ENCODE measurements at regions of chr17 and their contacts with region 1.

Region 1: DNA sequence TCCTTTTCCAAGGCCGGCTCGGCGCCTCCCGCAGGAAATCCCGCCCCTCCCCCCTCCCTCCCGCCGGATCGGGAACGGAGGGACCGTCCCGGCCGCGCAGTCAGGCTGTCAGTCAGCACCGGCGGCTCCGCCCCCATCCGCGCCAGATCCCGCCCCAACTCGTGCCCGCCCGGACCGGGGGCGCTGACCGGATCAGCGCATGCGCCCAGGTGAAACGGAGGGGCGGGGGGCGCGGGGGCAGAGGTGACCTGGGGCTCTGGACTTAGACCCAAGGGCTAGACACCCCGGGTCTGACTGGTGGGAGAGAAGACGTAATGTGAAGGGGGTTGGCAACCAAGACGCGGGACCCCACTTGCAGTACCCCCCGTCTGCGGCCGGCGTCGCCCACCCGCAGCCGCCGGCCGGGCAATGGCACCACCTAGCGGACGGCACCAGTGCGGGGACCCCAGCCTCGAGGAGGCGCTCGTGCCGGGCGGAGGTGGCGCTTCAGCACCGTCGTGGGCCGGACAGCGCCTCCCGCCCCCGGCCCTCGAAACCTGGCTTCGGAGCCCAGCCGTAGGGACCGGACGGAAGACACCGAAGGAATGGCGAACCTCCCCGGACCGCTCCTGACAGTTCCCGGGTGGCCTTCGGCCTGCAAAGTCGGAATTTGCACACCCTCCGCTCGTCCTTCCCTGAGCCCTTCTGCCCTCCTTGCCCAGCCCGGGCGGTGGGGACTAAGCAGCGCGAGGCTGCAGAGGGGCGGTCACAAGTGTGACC is at the start of gene CASKIN2:
- DNase-seq: peak; percentile 56 to 89 (median 80)
- ATAC-seq: peak; percentile 59
- H3K4me3 ChIP-seq: peak within 1 kb of the TSS; percentile 79 to 97
- H3K4me3 Mint-ChIP-seq: peak within 1 kb of the TSS; percentile 77
- H3K27ac ChIP-seq: peak within 1 kb of the TSS in 1 of 2 experiments; percentile 32
- H3K27ac Mint-ChIP-seq: no peak within 1 kb of the TSS
- H3K4me1 ChIP-seq: peaks cover 35% of the 10 kb centered on the region
- H3K4me1 Mint-ChIP-seq: peaks cover 26% of the 10 kb centered on the region
- H3K27me3 ChIP-seq: no peaks in the 10 kb centered on the region
- H3K27me3 Mint-ChIP-seq: no peaks in the 10 kb centered on the region
- CTCF ChIP-seq: peak; percentile 99
- total RNA-seq, gene CASKIN2: 0.64 to 0.98 TPM

Region 2: GRCh38 chr17:75271233-75271954 is 244.3 kb before region 1 on chr17:
- CTCF ChIA-PET with region 1: interaction called, 3 read pairs
- POLR2A ChIA-PET with region 1: interaction called, 5 read pairs
- intact Hi-C with region 1: loop called in 1 of 2 experiments (anchors 2 kb)
- DNase-seq: peak; percentile 75 to 94 (median 88)
- ATAC-seq: peak; percentile 92
- H3K4me3 ChIP-seq: peak overlapping the region; percentile 84 to 93
- H3K4me3 Mint-ChIP-seq: peak overlapping the region; percentile 81
- H3K27ac ChIP-seq: peak overlapping the region; percentile 82 to 91
- H3K27ac Mint-ChIP-seq: peak overlapping the region; percentile 84
- H3K4me1 ChIP-seq: peaks cover 18% of the 10 kb centered on the region
- H3K4me1 Mint-ChIP-seq: peaks cover 25% of the 10 kb centered on the region
- H3K27me3 ChIP-seq: no peaks in the 10 kb centered on the region
- H3K27me3 Mint-ChIP-seq: no peaks in the 10 kb centered on the region
- CTCF ChIP-seq: peak; percentile 65

Region 3: GRCh38 chr17:75456417-75457046 is 59.1 kb before region 1 on chr17 and contains the start of gene TMEM94:
- CTCF ChIA-PET with region 1: interaction called, 4 read pairs
- POLR2A ChIA-PET with region 1: interaction called, 18 read pairs
- intact Hi-C with region 1: loop called (anchors 2 kb)
- DNase-seq: peak; percentile 80 to 98 (median 91)
- ATAC-seq: peak; percentile 97
- H3K4me3 ChIP-seq: peak within 1 kb of the TSS; percentile 100
- H3K4me3 Mint-ChIP-seq: peak within 1 kb of the TSS; percentile 96
- H3K27ac ChIP-seq: peak within 1 kb of the TSS; percentile 75 to 82
- H3K27ac Mint-ChIP-seq: peak within 1 kb of the TSS; percentile 92
- H3K4me1 ChIP-seq: peaks cover 16% of the 10 kb centered on the region
- H3K4me1 Mint-ChIP-seq: peaks cover 36% of the 10 kb centered on the region
- H3K27me3 ChIP-seq: no peaks in the 10 kb centered on the region
- H3K27me3 Mint-ChIP-seq: peaks cover 3% of the 10 kb centered on the region
- CTCF ChIP-seq: no peak
- total RNA-seq, gene TMEM94: 44.8 to 46.5 TPM

Region 4: GRCh38 chr17:75535119-75535537 is 19.5 kb after region 1 on chr17:
- CTCF ChIA-PET with region 1: interaction called, 11 read pairs
- POLR2A ChIA-PET with region 1: interaction called, 12 read pairs
- intact Hi-C with region 1: no loop called
- DNase-seq: peak; percentile 30 to 87 (median 67)
- ATAC-seq: peak; percentile 96
- H3K4me3 ChIP-seq: peak overlapping the region; percentile 7 to 27
- H3K4me3 Mint-ChIP-seq: peak overlapping the region; percentile 76
- H3K27ac ChIP-seq: peak overlapping the region; percentile 59 to 73
- H3K27ac Mint-ChIP-seq: peak overlapping the region; percentile 93
- H3K4me1 ChIP-seq: peaks cover 18% of the 10 kb centered on the region
- H3K4me1 Mint-ChIP-seq: peaks cover 22% of the 10 kb centered on the region
- H3K27me3 ChIP-seq: no peaks in the 10 kb centered on the region
- H3K27me3 Mint-ChIP-seq: no peaks in the 10 kb centered on the region
- CTCF ChIP-seq: no peak

Region 5: DNA sequence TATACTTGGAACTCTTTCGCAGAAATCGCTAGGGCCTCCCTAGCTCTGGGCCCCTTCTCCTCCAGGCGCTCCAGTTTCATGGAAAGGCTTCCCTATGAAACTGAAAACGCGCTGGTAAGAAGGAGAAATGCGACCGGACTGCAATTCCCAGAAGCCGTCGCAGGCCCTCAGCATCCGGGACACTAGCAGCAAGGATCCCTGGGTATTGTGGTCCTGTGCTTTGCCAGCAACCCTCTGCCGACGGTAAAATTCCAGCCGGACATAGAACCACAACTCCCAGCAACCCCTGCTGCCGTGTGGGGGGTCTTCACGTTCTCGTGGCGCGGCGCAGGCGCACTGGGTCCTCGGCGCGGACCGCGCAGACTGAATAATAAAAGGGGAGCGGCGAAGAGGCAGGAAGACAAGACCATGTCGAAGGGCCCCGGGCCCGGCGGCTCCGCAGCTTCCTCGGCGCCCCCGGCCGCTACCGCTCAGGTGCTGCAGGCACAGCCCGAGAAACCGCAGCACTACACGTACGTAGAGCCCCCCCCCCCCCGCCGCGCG is 268.9 kb after region 1 on chr17 and contains the start of gene UNK:
- CTCF ChIA-PET with region 1: no interaction called
- POLR2A ChIA-PET with region 1: interaction called, 3 read pairs
- intact Hi-C with region 1: loop called in 1 of 2 experiments (anchors 5 kb)
- DNase-seq: peak; percentile 91 to 99 (median 96)
- ATAC-seq: peak; percentile 64
- H3K4me3 ChIP-seq: peak within 1 kb of the TSS; percentile 57 to 78
- H3K4me3 Mint-ChIP-seq: peak within 1 kb of the TSS; percentile 93
- H3K27ac ChIP-seq: peak within 1 kb of the TSS; percentile 95 to 100
- H3K27ac Mint-ChIP-seq: peak within 1 kb of the TSS; percentile 98
- H3K4me1 ChIP-seq: peaks cover 39% of the 10 kb centered on the region
- H3K4me1 Mint-ChIP-seq: peaks cover 49% of the 10 kb centered on the region
- H3K27me3 ChIP-seq: no peaks in the 10 kb centered on the region
- H3K27me3 Mint-ChIP-seq: no peaks in the 10 kb centered on the region
- CTCF ChIP-seq: no peak
- total RNA-seq, gene UNK: 37.3 to 42.8 TPM